SK-N-SH (cell line): ENCODE measurements at regions of chr2 and their contacts with region 1.

Region 1: GRCh38 chr2:27191053-27191829 is 20.6 kb upstream of the ATRAID start:
- DNase-seq: peak; percentile 84
- H3K4me3 ChIP-seq: no peak overlapping the region
- H3K27ac ChIP-seq: no peak overlapping the region
- H3K4me1 ChIP-seq: no peaks in the 10 kb centered on the region
- H3K27me3 ChIP-seq: no peaks in the 10 kb centered on the region
- CTCF ChIP-seq: peak; percentile 95
- EP300 ChIP-seq: 0 out of 4 replicates have a peak, but pooled peaks of 1 of the 2 experiments have one; percentile 20
- RAD21 ChIP-seq: peak; percentile 98

Region 2: DNA sequence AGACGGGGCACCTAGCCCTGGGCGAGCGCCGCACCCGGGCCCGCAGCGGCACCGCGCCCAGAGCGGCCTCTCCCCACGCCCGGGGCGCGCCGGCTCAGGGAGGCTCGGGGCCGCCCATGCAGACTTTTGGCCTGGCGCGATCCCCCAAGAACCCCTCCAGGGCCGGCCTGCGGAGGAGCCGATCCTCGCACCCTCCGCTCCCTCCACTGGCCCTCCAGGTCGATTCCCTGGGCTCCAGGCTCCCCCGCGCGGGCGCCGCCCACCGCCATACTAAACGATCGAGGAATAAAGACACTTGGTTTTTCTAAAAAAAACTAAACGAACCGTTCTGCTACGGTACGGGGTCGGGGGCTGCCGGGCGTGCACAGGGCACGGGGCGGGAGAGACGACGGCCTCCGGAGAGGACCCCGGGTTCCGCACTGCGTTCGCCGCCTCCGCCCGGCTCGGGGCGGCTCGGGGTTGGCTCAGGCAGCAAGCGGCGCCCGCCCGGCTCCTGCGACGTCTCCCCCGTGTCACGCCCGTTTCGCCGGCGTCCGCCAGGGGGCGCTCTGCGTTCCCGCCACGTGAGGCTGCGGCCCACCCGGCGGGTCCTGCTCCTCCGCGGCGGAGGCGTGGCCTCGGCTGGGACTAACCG is 105.0 kb before region 1 on chr2:
- CTCF ChIA-PET with region 1: interaction called, 21 read pairs
- POLR2A ChIA-PET with region 1: interaction called, 5 read pairs
- DNase-seq: peak; percentile 100
- H3K4me3 ChIP-seq: peak overlapping the region; percentile 65 to 75
- H3K27ac ChIP-seq: peak overlapping the region; percentile 37 to 89; a peak in 3 of 4 replicates
- H3K4me1 ChIP-seq: peaks cover 9 to 46% of the 10 kb centered on the region in 2 experiments; a peak in 3 of 4 replicates
- H3K27me3 ChIP-seq: no peaks in the 10 kb centered on the region
- CTCF ChIP-seq: peak; percentile 69
- EP300 ChIP-seq: peak in 1 of 2 experiments; percentile 42; a peak in 1 of 4 replicates
- RAD21 ChIP-seq: peak; percentile 52

Region 3: GRCh38 chr2:27102329-27102728 is 88.9 kb before region 1 on chr2:
- CTCF ChIA-PET with region 1: interaction called, 131 read pairs
- POLR2A ChIA-PET with region 1: interaction called, 6 read pairs
- DNase-seq: no peak
- H3K4me3 ChIP-seq: no peak overlapping the region
- H3K27ac ChIP-seq: no peak overlapping the region
- H3K4me1 ChIP-seq: peaks cover 0 to under 1% of the 10 kb centered on the region in 2 experiments; a peak in 1 of 4 replicates
- H3K27me3 ChIP-seq: no peaks in the 10 kb centered on the region
- CTCF ChIP-seq: no peak
- EP300 ChIP-seq: no peak
- RAD21 ChIP-seq: no peak

Region 4: GRCh38 chr2:27152786-27153510 is 38.3 kb before region 1 on chr2:
- CTCF ChIA-PET with region 1: interaction called, 19 read pairs
- POLR2A ChIA-PET with region 1: no interaction called
- DNase-seq: no peak
- H3K4me3 ChIP-seq: no peak overlapping the region
- H3K27ac ChIP-seq: no peak overlapping the region
- H3K4me1 ChIP-seq: no peaks in the 10 kb centered on the region
- H3K27me3 ChIP-seq: peaks cover 4% of the 10 kb centered on the region; the same call in 1 of the 2 replicates
- CTCF ChIP-seq: no peak
- EP300 ChIP-seq: no peak
- RAD21 ChIP-seq: no peak

Region 5: GRCh38 chr2:27174316-27175040 is 16.8 kb before region 1 on chr2:
- CTCF ChIA-PET with region 1: interaction called, 57 read pairs
- POLR2A ChIA-PET with region 1: no interaction called
- DNase-seq: no peak
- H3K4me3 ChIP-seq: no peak overlapping the region
- H3K27ac ChIP-seq: no peak overlapping the region
- H3K4me1 ChIP-seq: peaks cover 3 to 5% of the 10 kb centered on the region in 2 experiments; a peak in 3 of 4 replicates
- H3K27me3 ChIP-seq: no peaks in the 10 kb centered on the region
- CTCF ChIP-seq: no peak
- EP300 ChIP-seq: no peak
- RAD21 ChIP-seq: no peak

Region 6: GRCh38 chr2:27211829-27212627 is 20.8 kb after region 1 on chr2 and contains the starts of genes ATRAID and SLC5A6:
- CTCF ChIA-PET with region 1: interaction called, 25 read pairs
- POLR2A ChIA-PET with region 1: no interaction called
- DNase-seq: peak; percentile 99
- H3K4me3 ChIP-seq: peak within 1 kb of the TSS; percentile 84 to 86
- H3K27ac ChIP-seq: peak within 1 kb of the TSS; percentile 89 to 99
- H3K4me1 ChIP-seq: peaks cover 5 to 26% of the 10 kb centered on the region in 2 experiments; a peak in 3 of 4 replicates
- H3K27me3 ChIP-seq: no peaks in the 10 kb centered on the region
- CTCF ChIP-seq: no peak
- EP300 ChIP-seq: no peak
- RAD21 ChIP-seq: no peak
- polyA plus RNA-seq, gene ATRAID: 289 and 366 TPM in 2 replicates
- polyA plus RNA-seq, gene SLC5A6: 75.7 and 85.0 TPM in 2 replicates

Region 7: GRCh38 chr2:27370026-27370815 is 179.0 kb after region 1 on chr2 and contains the starts of genes EIF2B4 and SNX17:
- CTCF ChIA-PET with region 1: no interaction called
- POLR2A ChIA-PET with region 1: no interaction called
- DNase-seq: peak; percentile 98
- H3K4me3 ChIP-seq: peak within 1 kb of the TSS; percentile 94 to 99
- H3K27ac ChIP-seq: peak within 1 kb of the TSS; percentile 79 to 89
- H3K4me1 ChIP-seq: peaks cover 11 to 22% of the 10 kb centered on the region in 2 experiments; a peak in 3 of 4 replicates
- H3K27me3 ChIP-seq: no peaks in the 10 kb centered on the region
- CTCF ChIP-seq: peak; percentile 84
- EP300 ChIP-seq: no peak; a peak in 1 of 4 replicates
- RAD21 ChIP-seq: peak; percentile 55
- polyA plus RNA-seq, gene EIF2B4: 51.7 and 56.0 TPM in 2 replicates
- polyA plus RNA-seq, gene SNX17: 128 and 145 TPM in 2 replicates